Calu3 (cell line): ENCODE measurements at regions of chr4 and their contacts with region 1.

Region 1: GRCh38 chr4:174631901-174632758 is 109.8 kb upstream of the HPGD start:
- DNase-seq: peak; percentile 12
- H3K4me3 Mint-ChIP-seq: no peak overlapping the region
- H3K27ac Mint-ChIP-seq: no peak overlapping the region
- H3K4me1 Mint-ChIP-seq: peaks cover 3% of the 10 kb centered on the region
- H3K27me3 Mint-ChIP-seq: no peaks in the 10 kb centered on the region
- CTCF ChIP-seq: no peak

Region 2: DNA sequence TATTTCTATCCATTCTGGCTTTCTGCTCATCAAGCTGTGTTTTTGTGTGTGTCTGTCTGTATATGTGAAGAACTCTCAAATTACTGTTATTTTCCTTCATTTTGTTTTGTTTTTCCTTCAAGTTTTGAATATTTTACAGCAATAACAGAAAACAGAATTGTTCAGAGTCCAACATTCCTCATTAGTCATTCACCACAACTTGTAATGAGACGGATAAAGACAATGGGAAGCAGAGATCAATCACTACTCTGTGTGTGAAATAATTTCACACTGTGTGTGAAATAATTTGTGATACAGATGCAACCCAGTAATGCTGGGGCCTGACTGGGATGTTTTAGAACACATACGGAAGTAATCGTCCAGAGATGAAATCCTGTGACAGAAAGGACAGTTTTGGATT is 165.0 kb before region 1 on chr4:
- CTCF ChIA-PET with region 1: no interaction called
- intact Hi-C with region 1: no loop called
- DNase-seq: no peak
- H3K4me3 Mint-ChIP-seq: no peak overlapping the region
- H3K27ac Mint-ChIP-seq: peak overlapping the region; percentile 10
- H3K4me1 Mint-ChIP-seq: peaks cover 27% of the 10 kb centered on the region
- H3K27me3 Mint-ChIP-seq: no peaks in the 10 kb centered on the region
- CTCF ChIP-seq: no peak

Region 3: DNA sequence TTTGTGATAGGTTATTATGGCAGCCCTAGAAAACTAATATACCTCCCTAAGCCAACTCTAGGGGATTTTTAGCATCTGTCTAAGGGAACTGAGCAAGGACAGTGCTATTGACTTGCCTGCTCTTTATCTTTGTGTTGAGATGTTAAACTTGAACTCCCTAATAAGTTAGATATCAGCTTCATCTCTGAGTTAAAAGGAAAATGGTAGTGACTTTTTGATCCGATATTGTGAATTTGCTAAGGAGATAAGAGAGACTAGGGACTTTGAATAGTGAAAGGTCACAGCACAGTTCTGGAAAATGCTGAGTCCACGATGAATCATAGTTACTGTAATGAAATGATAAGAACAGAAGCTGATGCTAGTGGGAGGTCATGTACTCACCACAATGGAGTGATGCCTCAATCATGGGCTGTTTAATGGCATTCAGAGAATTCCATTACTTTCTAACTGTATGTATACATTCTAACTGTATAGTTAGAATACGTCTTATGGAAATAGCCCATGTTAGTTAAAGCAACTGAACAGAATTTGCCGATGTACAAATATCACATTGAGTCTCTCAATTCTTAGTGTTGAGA is 49.7 kb after region 1 on chr4:
- CTCF ChIA-PET with region 1: no interaction called
- intact Hi-C with region 1: no loop called
- DNase-seq: no peak
- H3K4me3 Mint-ChIP-seq: no peak overlapping the region
- H3K27ac Mint-ChIP-seq: no peak overlapping the region
- H3K4me1 Mint-ChIP-seq: peaks cover 9% of the 10 kb centered on the region
- H3K27me3 Mint-ChIP-seq: no peaks in the 10 kb centered on the region
- CTCF ChIP-seq: no peak

Region 4: DNA sequence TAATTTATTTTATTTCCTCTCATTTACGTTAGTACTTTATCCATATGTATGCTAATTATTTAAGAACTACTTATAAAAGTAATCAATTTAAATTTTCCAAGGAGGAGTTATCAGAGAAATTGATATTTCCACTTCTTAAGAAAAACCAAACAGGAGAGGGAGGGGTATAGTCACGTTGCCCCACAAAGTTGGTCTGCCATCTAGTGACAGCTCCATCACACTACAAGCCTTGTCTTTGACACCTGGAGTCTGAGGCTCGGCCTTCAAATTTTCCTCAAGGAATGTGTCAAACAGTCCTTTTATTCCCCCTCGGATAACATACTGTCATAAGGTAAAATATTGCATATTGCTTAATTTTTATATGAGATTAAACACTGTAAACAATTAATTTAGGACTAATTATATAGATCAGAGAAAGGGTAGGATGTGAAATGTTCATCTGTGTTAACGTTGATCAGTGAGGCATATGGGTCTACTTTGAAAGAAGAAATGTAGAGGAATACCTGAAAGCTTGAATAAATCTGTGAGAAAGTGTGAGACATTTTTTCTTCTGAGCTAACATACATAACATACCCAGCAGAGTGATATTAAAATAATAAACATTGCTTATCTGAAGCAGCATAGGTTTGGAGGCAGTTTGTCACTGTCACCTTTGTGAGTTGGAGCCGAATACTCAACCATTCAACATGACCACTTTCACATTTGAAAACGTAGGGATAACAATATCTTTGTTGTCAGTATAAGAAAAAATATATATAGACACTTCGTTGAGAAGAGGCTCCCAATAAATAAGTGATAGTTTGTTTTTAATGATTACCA is 82.5 kb after region 1 on chr4:
- CTCF ChIA-PET with region 1: no interaction called
- intact Hi-C with region 1: loop called (anchors 5 kb)
- DNase-seq: peak; percentile 39
- H3K4me3 Mint-ChIP-seq: no peak overlapping the region
- H3K27ac Mint-ChIP-seq: no peak overlapping the region
- H3K4me1 Mint-ChIP-seq: no peaks in the 10 kb centered on the region
- H3K27me3 Mint-ChIP-seq: no peaks in the 10 kb centered on the region
- CTCF ChIP-seq: peak; percentile 47

Region 5: GRCh38 chr4:174724976-174725375 is 92.8 kb after region 1 on chr4:
- CTCF ChIA-PET with region 1: no interaction called
- intact Hi-C with region 1: no loop called
- DNase-seq: no peak
- H3K4me3 Mint-ChIP-seq: no peak overlapping the region
- H3K27ac Mint-ChIP-seq: no peak overlapping the region
- H3K4me1 Mint-ChIP-seq: no peaks in the 10 kb centered on the region
- H3K27me3 Mint-ChIP-seq: no peaks in the 10 kb centered on the region
- CTCF ChIP-seq: no peak